Common myeloid progenitor, CD34-positive (primary cell): ENCODE measurements at regions of chrX and their contacts with region 1.

Region 1: DNA sequence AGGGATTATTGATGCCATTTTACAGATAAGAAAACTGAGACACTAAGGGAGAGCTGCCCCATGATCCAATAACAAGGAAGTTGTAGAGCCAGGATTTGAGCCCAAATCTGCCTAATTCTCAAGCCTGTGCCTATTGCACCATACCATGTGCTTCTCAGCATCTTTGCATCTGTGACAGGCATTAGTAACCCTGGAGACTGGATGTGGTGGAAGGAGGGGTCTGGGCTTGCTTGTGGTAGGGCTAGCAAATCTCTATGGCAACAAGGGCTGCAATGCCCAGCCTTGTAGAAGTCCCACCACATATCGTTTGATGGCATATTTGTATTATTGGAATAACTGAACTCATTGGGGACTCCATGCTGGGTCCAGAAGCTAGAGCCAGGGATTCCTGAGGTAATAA is 58.1 kb downstream of the RTL5 start:
- DNase-seq: peak in 1 of 3 donors; percentile 17
- H3K4me3 ChIP-seq: no peak overlapping the region
- H3K27ac ChIP-seq: no peak overlapping the region
- H3K4me1 ChIP-seq: peaks cover 2 to 38% (median 30%) of the 10 kb centered on the region in 4 experiments
- H3K27me3 ChIP-seq: peaks cover 0 to 26% (median 0%) of the 10 kb centered on the region in 5 experiments

Region 2: GRCh38 chrX:72060196-72060920 is 13.3 kb before region 1 on chrX:
- CTCF ChIA-PET with region 1: interaction called, 10 read pairs
- POLR2A ChIA-PET with region 1: no interaction called
- DNase-seq: peak; percentile 12 to 64 (median 53)
- H3K4me3 ChIP-seq: no peak overlapping the region
- H3K27ac ChIP-seq: no peak overlapping the region
- H3K4me1 ChIP-seq: peaks cover 4 to 22% (median 13%) of the 10 kb centered on the region in 4 experiments
- H3K27me3 ChIP-seq: peaks cover 0 to 18% (median 0%) of the 10 kb centered on the region in 5 experiments